H1 (cell line): ENCODE measurements at regions of chr11 and their contacts with region 1.

Region 1: DNA sequence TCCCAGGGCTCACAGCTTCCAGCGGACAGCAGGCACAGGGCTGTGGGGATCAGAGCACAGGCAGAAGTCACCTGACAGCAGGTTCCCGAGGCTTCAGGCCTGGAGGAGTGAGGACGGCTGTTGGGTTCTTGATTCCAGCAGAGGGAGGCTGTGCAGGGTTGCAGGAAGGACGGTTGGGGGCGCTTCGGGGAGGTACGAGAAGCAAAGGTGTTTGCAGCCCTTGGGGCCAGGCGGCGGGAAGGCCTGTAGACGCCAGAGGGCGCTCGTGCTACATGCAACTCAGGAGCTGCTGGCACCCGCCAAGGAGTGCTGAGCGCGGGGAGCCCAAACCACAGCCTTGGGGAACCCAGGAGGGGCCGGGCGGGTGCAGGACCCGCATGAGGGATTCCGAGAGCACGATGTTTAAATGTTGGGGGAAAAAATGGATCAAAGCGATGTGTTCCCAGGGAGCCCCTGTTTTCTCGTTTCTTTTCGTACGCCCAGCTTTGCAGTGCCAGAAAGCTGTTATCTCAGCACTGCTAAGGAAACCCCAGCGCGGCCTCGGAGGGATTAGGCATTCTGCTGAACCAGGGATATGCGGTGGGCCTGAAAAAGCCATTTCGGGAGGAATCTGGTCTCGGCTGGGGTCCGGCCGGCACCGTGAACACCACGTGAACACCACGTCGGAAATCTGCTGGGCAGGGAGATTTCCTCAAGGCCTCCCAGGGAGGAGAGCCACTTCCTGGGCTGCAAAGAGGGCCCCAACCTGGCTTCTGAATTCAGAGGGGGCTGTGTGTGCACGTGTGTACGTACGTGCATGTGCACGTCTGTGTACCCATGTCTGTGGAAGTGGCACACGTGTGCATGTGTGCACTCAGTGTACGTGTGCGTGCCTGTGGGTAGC is 88.1 kb downstream of the KCNQ1 start:
- DNase-seq: peak; percentile 96 to 99
- H3K4me3 ChIP-seq: no peak overlapping the region
- H3K27ac ChIP-seq: peak overlapping the region; percentile 4; the same call in 1 of the 2 replicates
- H3K4me1 ChIP-seq: peaks cover 4 to 16% (median 10%) of the 10 kb centered on the region in 4 experiments
- H3K27me3 ChIP-seq: peaks cover 1 to 40% (median 14%) of the 10 kb centered on the region in 4 experiments; a peak in 6 of 7 replicates
- CTCF ChIP-seq: peak in 2 of 3 experiments; percentile 99 to 100; a peak in 3 of 4 replicates
- EP300 ChIP-seq: peak in 1 of 2 experiments; percentile 81; a peak in 1 of 3 replicates
- POLR2A ChIP-seq: no peak
- RAD21 ChIP-seq: peak; percentile 99 to 100

Region 2: GRCh38 chr11:2420502-2421225 is 112.3 kb before region 1 on chr11:
- CTCF ChIA-PET with region 1: interaction called, 359 read pairs
- POLR2A ChIA-PET with region 1: interaction called, 5 read pairs
- DNase-seq: peak; percentile 65 to 85
- H3K4me3 ChIP-seq: no peak overlapping the region
- H3K27ac ChIP-seq: no peak overlapping the region
- H3K4me1 ChIP-seq: peaks cover 0 to 5% (median under 1%) of the 10 kb centered on the region in 4 experiments; a peak in 2 of 7 replicates
- H3K27me3 ChIP-seq: peaks cover 0 to 3% (median 0%) of the 10 kb centered on the region in 4 experiments; a peak in 2 of 7 replicates
- CTCF ChIP-seq: peak in 2 of 3 experiments; percentile 94 to 97; a peak in 3 of 4 replicates
- EP300 ChIP-seq: no peak
- POLR2A ChIP-seq: no peak
- RAD21 ChIP-seq: peak; percentile 92 to 95

Region 3: GRCh38 chr11:2452321-2453012 is 80.5 kb before region 1 on chr11:
- CTCF ChIA-PET with region 1: interaction called, 16 read pairs
- POLR2A ChIA-PET with region 1: no interaction called
- DNase-seq: no peak
- H3K4me3 ChIP-seq: no peak overlapping the region
- H3K27ac ChIP-seq: no peak overlapping the region
- H3K4me1 ChIP-seq: no peaks in the 10 kb centered on the region
- H3K27me3 ChIP-seq: peaks cover 8 to 54% (median 28%) of the 10 kb centered on the region in 4 experiments
- CTCF ChIP-seq: no peak
- EP300 ChIP-seq: no peak
- POLR2A ChIP-seq: no peak
- RAD21 ChIP-seq: no peak

Region 4: GRCh38 chr11:2511421-2512369 is 21.2 kb before region 1 on chr11:
- CTCF ChIA-PET with region 1: interaction called, 50 read pairs
- POLR2A ChIA-PET with region 1: no interaction called
- DNase-seq: no peak
- H3K4me3 ChIP-seq: no peak overlapping the region
- H3K27ac ChIP-seq: no peak overlapping the region
- H3K4me1 ChIP-seq: no peaks in the 10 kb centered on the region
- H3K27me3 ChIP-seq: peaks cover 2 to 40% (median 24%) of the 10 kb centered on the region in 4 experiments
- CTCF ChIP-seq: no peak
- EP300 ChIP-seq: no peak
- POLR2A ChIP-seq: no peak
- RAD21 ChIP-seq: no peak

Region 5: GRCh38 chr11:2621894-2622293 is 88.9 kb after region 1 on chr11:
- CTCF ChIA-PET with region 1: no interaction called
- POLR2A ChIA-PET with region 1: no interaction called
- DNase-seq: no peak
- H3K4me3 ChIP-seq: no peak overlapping the region
- H3K27ac ChIP-seq: no peak overlapping the region
- H3K4me1 ChIP-seq: no peaks in the 10 kb centered on the region
- H3K27me3 ChIP-seq: peaks cover 6 to 63% (median 47%) of the 10 kb centered on the region in 4 experiments; a peak in 6 of 7 replicates
- CTCF ChIP-seq: no peak
- EP300 ChIP-seq: no peak
- POLR2A ChIP-seq: no peak
- RAD21 ChIP-seq: no peak

Region 6: DNA sequence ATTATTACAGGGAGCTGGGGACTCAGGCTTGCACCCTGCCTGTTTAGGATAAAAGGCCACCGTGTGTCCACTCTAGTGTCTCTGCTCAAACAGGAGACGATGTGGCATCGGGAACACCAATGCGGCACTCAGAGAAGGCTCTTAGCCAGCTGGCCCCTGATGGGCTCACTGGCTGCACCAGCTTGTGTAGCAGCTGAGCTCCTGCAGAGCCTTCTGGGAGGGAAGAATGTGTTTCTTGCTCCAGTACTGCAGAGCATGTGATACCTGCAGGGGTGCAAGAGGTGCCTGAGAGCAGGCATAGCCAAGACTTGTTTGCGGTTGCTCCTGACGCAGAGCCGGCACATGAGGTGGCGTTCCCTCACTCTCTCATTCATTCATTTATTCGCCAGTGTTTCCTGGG is 211.2 kb after region 1 on chr11:
- CTCF ChIA-PET with region 1: interaction called, 12 read pairs
- POLR2A ChIA-PET with region 1: interaction called, 3 read pairs
- DNase-seq: no peak
- H3K4me3 ChIP-seq: no peak overlapping the region
- H3K27ac ChIP-seq: no peak overlapping the region
- H3K4me1 ChIP-seq: no peaks in the 10 kb centered on the region; a peak in 1 of 7 replicates
- H3K27me3 ChIP-seq: peaks cover 0 to 20% (median 14%) of the 10 kb centered on the region in 4 experiments; a peak in 6 of 7 replicates
- CTCF ChIP-seq: no peak
- EP300 ChIP-seq: no peak
- POLR2A ChIP-seq: no peak
- RAD21 ChIP-seq: no peak

Region 7: GRCh38 chr11:2877474-2877873 is 344.5 kb after region 1 on chr11:
- CTCF ChIA-PET with region 1: interaction called, 521 read pairs
- POLR2A ChIA-PET with region 1: no interaction called
- DNase-seq: no peak
- H3K4me3 ChIP-seq: no peak overlapping the region
- H3K27ac ChIP-seq: no peak overlapping the region
- H3K4me1 ChIP-seq: peaks cover 0 to 4% (median 1%) of the 10 kb centered on the region in 4 experiments; a peak in 6 of 7 replicates
- H3K27me3 ChIP-seq: peaks cover 0 to 54% (median 36%) of the 10 kb centered on the region in 4 experiments; a peak in 6 of 7 replicates
- CTCF ChIP-seq: no peak
- EP300 ChIP-seq: no peak
- POLR2A ChIP-seq: no peak
- RAD21 ChIP-seq: no peak

Region 8: DNA sequence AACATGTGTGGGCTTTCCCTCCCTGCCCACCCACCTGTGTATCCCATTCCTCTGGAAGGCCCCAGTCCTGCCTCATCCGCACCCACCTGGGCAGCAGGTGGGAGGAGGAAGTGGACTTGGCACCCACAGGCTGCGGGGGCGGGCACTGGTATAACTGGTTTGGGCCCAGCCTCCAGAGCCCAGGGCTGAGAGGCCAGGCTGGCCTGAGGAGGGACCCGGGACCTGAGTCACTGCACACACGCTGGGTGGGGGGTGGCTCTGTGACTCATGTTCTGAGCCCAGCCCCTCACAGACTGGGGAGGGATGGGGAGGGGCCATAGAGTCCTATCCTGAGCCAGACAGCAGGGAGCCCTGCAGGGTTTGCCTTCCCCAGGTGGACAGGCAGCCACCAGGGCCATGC is 379.6 kb after region 1 on chr11:
- CTCF ChIA-PET with region 1: interaction called, 10 read pairs
- POLR2A ChIA-PET with region 1: no interaction called
- DNase-seq: no peak
- H3K4me3 ChIP-seq: no peak overlapping the region
- H3K27ac ChIP-seq: no peak overlapping the region
- H3K4me1 ChIP-seq: peaks cover 0 to 19% (median 8%) of the 10 kb centered on the region in 4 experiments; a peak in 4 of 7 replicates
- H3K27me3 ChIP-seq: no peaks in the 10 kb centered on the region
- CTCF ChIP-seq: no peak
- EP300 ChIP-seq: no peak
- POLR2A ChIP-seq: no peak
- RAD21 ChIP-seq: no peak